Lower leg skin (tissue), 4 donors: ENCODE measurements at regions of chr7 and their contacts with region 1.

Region 1: GRCh38 chr7:37833107-37833817 is 15.1 kb upstream of the NME8 start:
- DNase-seq: peak in 1 of 2 donors; percentile 17
- H3K4me3 ChIP-seq: peak overlapping the region; percentile 6
- CTCF ChIP-seq: no peak
- POLR2A ChIP-seq: no peak

Region 2: DNA sequence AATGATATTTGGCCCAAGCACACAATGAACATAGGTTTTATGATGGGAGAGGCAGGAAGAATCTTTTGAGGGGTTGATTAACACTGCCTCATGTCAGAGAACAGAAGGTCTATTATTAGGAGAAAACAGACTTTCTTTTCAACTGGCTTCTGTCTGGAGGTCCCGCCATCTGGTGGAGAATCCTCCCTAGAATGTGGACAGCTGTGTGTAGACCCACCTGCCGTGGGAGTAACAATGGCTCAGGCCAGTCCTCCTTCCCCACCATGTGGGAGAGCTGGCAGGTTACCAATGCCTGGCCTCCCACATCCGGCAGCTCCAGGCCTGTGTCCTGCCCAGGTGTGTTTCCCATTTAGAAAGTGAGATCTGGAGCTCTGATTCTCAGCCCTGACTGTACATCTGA is 1038.6 kb before region 1 on chr7:
- intact Hi-C with region 1: no loop called
- DNase-seq: no peak
- H3K4me3 ChIP-seq: no peak overlapping the region
- CTCF ChIP-seq: no peak
- POLR2A ChIP-seq: no peak

Region 3: DNA sequence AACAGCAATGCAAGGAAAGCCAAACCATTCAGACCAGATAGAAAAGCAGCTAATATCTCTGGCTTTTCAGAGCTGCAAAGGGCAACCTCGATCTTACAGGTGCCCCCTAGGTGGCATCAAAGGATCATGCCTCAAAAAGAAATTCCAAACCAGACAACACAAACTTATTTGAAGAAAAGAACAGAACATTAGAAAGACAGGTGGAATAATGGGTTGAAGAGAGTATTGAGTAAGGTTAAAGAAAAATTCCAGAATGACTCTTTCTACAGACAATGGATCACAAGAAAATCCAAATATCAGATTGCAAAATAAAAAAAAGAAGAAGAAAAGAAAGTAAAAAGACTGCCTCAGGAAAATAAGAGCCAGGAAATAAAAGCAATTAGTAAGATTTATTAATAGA is 598.3 kb before region 1 on chr7:
- intact Hi-C with region 1: loop called (anchors 10 kb)
- DNase-seq: no peak
- H3K4me3 ChIP-seq: no peak overlapping the region
- CTCF ChIP-seq: no peak
- POLR2A ChIP-seq: no peak

Region 4: GRCh38 chr7:37759526-37759925 is 73.7 kb before region 1 on chr7:
- intact Hi-C with region 1: no loop called
- DNase-seq: no peak
- H3K4me3 ChIP-seq: no peak overlapping the region
- CTCF ChIP-seq: no peak
- POLR2A ChIP-seq: no peak